Tibial artery (tissue), 4 donors: ENCODE measurements at regions of chr5 and their contacts with region 1.

Region 1: GRCh38 chr5:107402434-107403227 is 268.1 kb downstream of the EFNA5 start:
- DNase-seq: no peak
- H3K4me3 ChIP-seq: no peak overlapping the region
- H3K27ac ChIP-seq: no peak overlapping the region
- H3K4me1 ChIP-seq: peaks cover 0 to 23% (median 6%) of the 10 kb centered on the region in 4 donors
- H3K27me3 ChIP-seq: no peaks in the 10 kb centered on the region
- CTCF ChIP-seq: no peak

Region 2: GRCh38 chr5:107277485-107278125 is 125.0 kb before region 1 on chr5:
- intact Hi-C with region 1: loop called (anchors 5 kb)
- DNase-seq: no peak
- H3K4me3 ChIP-seq: no peak overlapping the region
- H3K27ac ChIP-seq: no peak overlapping the region
- H3K4me1 ChIP-seq: no peaks in the 10 kb centered on the region
- H3K27me3 ChIP-seq: no peaks in the 10 kb centered on the region
- CTCF ChIP-seq: no peak

Region 3: GRCh38 chr5:107869438-107870115 is 466.9 kb after region 1 on chr5:
- intact Hi-C with region 1: no loop called
- DNase-seq: no peak
- H3K4me3 ChIP-seq: no peak overlapping the region
- H3K27ac ChIP-seq: no peak overlapping the region
- H3K4me1 ChIP-seq: peaks cover 0 to 22% (median 0%) of the 10 kb centered on the region in 4 donors
- H3K27me3 ChIP-seq: no peaks in the 10 kb centered on the region
- CTCF ChIP-seq: no peak